Naive thymus-derived CD4-positive, alpha-beta T cell (primary cell): ENCODE measurements at regions of chr5 and their contacts with region 1.

Region 1: DNA sequence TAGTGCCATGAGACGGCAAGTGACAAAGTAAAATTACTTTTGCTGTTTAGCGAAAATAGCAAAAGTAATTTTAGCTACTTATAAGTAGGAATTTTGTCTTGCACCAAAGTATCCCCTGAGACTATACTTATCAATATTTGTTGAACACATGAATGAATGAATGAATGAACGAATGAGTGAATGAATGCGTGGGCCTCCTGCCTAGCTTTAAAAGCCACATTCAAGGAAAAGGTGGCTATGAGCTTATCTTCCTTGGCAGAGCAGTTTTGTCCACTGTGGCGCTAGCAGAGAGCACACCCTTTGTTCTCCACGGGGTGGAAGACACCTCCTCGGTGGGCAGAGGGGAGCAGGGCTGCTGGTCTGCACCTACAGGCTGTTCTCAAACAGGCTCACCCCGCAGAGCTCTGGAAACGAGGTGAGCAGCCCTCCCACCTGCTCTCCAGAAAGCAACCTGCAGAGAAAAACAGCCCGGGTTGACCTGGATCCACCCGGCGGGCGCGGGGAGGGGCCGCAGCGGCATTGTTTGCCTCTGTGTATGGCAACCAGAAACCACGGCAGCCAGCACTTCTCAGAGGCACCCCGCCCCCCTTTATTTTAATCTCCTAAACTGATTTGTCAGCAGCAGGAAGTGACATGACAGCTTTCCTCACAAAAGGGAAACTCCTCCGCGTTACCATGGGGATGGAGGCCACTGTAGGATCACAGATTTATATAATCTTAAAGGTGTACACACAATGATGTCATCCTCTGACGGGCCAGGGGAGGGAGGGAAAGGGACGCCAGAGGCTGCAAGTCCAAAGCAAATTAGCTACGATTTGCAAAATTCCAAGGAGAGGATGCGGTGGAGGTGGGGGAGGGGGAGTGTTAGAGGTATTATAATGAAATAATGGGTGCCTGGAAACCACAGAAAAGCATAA is 5.9 kb downstream of the DUSP1 start:
- DNase-seq: peak; percentile 86 to 100 (median 99)
- ATAC-seq: peak; percentile 73
- H3K4me3 ChIP-seq: peak overlapping the region; percentile 64
- H3K4me3 Mint-ChIP-seq: peak overlapping the region; percentile 80 to 93 (median 84)
- H3K27ac ChIP-seq: peak overlapping the region; percentile 93
- H3K27ac Mint-ChIP-seq: peak overlapping the region; percentile 94 to 100 (median 97)
- H3K4me1 ChIP-seq: peaks cover 25 to 31% of the 10 kb centered on the region in 2 donors
- H3K4me1 Mint-ChIP-seq: peaks cover 8 to 62% (median 52%) of the 10 kb centered on the region in 7 donors
- H3K27me3 ChIP-seq: no peaks in the 10 kb centered on the region
- H3K27me3 Mint-ChIP-seq: peaks cover 0 to 8% (median 0%) of the 10 kb centered on the region in 5 donors

Region 2: DNA sequence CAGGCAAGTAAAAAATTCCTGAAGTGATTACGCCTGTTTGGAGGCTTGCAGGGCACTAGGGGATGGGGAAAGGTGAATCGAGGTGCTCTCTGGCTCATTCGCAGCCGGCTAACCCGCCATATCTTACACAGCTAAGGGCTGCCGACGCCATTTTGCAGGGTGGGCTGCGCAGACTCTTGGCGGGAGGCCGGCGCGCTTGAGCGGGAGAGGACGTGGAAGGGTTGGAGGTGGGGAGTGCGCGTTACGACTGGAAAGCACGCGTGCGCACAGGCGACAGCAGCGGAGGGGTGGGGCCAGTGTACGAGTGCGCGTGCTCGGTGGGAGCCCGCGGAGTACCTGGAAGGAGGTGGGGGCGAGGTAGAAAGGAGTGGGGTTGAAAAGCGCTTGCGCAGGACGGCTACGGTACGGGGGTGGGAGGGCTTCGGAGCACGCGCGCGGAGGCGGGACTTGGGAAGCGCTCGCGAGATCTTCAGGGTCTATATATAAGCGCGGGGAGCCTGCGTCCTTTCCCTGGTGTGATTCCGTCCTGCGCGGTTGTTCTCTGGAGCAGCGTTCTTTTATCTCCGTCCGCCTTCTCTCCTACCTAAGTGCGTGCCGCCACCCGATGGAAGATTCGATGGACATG is 1377.7 kb before region 1 on chr5 and contains the start of gene NPM1:
- CTCF ChIA-PET with region 1: no interaction called
- POLR2A ChIA-PET with region 1: no interaction called
- intact Hi-C with region 1: loop called (anchors 1 to 5 kb)
- DNase-seq: peak; percentile 90 to 99 (median 98)
- ATAC-seq: peak; percentile 93
- H3K4me3 ChIP-seq: peak within 1 kb of the TSS; percentile 91
- H3K4me3 Mint-ChIP-seq: peak within 1 kb of the TSS; percentile 92 to 99 (median 98)
- H3K27ac ChIP-seq: peak within 1 kb of the TSS; percentile 88
- H3K27ac Mint-ChIP-seq: peak within 1 kb of the TSS; percentile 96 to 100 (median 98)
- H3K4me1 ChIP-seq: peaks cover 31 to 40% of the 10 kb centered on the region in 2 donors
- H3K4me1 Mint-ChIP-seq: peaks cover 25 to 52% (median 49%) of the 10 kb centered on the region in 7 donors
- H3K27me3 ChIP-seq: no peaks in the 10 kb centered on the region
- H3K27me3 Mint-ChIP-seq: peaks cover 0 to 6% (median 0%) of the 10 kb centered on the region in 5 donors
- total RNA-seq, gene NPM1: 807 to 1,238 (median 1,192) TPM

Region 3: GRCh38 chr5:172777881-172778814 is 13.0 kb after region 1 on chr5:
- CTCF ChIA-PET with region 1: interaction called, 10 read pairs
- POLR2A ChIA-PET with region 1: interaction called, 31 read pairs
- intact Hi-C with region 1: loop called in 1 of 2 experiments (anchors 1 kb)
- DNase-seq: no peak
- ATAC-seq: peak; percentile 26
- H3K4me3 ChIP-seq: peak overlapping the region; percentile 10
- H3K4me3 Mint-ChIP-seq: peak overlapping the region in 9 of 10 donors; percentile 60 to 81 (median 64)
- H3K27ac ChIP-seq: peak overlapping the region; percentile 89
- H3K27ac Mint-ChIP-seq: peak overlapping the region; percentile 91 to 98 (median 93)
- H3K4me1 ChIP-seq: peaks cover 23 to 27% of the 10 kb centered on the region in 2 donors
- H3K4me1 Mint-ChIP-seq: peaks cover 18 to 46% (median 40%) of the 10 kb centered on the region in 7 donors
- H3K27me3 ChIP-seq: no peaks in the 10 kb centered on the region
- H3K27me3 Mint-ChIP-seq: peaks cover 0 to 3% (median 0%) of the 10 kb centered on the region in 5 donors

Region 4: DNA sequence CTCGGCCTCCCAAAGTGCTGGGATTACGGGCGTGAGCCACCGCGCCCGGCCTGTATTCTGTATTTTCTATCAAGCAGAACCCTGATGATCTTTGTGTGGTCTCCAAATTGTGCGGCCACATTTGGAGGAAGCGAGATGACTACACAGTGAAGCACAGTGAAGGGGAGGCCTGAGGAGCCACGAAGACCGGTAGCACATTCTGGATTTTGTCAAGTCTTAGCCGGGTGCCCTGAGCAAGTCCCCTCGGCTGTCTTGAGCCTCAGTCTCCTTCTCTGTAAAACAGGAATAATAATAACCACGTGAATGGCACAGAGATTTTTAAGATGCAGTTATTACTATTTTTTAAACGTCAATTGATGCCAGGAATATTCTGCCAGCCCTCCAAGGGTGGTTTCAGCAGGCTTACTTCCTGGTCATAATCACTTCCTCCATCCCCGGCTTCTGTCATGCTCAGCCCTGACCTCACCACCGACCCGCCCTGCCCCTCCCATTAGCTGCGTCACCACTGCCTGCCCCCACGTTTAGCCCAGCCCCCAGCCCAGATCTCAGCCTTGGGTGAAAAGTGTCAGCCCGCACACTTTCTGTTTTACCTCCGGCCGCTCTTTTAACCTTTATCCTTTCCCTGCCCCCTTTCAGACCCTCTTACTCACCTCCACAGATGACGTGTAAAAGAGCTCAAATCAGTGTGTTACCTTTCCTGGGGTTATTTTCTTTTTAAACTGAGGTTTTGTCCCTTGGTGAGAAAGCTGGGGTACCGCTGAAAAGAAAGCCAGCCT is 42.0 kb after region 1 on chr5:
- CTCF ChIA-PET with region 1: no interaction called
- POLR2A ChIA-PET with region 1: no interaction called
- intact Hi-C with region 1: loop called in 1 of 2 experiments (anchors 1 kb)
- DNase-seq: peak; percentile 24 to 78 (median 52)
- ATAC-seq: peak; percentile 98
- H3K4me3 ChIP-seq: peak overlapping the region; percentile 45
- H3K4me3 Mint-ChIP-seq: peak overlapping the region; percentile 73 to 87 (median 84)
- H3K27ac ChIP-seq: peak overlapping the region; percentile 74
- H3K27ac Mint-ChIP-seq: peak overlapping the region; percentile 86 to 98 (median 93)
- H3K4me1 ChIP-seq: peaks cover 0 to 12% of the 10 kb centered on the region in 2 donors
- H3K4me1 Mint-ChIP-seq: peaks cover 9 to 17% (median 13%) of the 10 kb centered on the region in 7 donors
- H3K27me3 ChIP-seq: no peaks in the 10 kb centered on the region
- H3K27me3 Mint-ChIP-seq: peaks cover 0 to 2% (median 0%) of the 10 kb centered on the region in 5 donors

Region 5: DNA sequence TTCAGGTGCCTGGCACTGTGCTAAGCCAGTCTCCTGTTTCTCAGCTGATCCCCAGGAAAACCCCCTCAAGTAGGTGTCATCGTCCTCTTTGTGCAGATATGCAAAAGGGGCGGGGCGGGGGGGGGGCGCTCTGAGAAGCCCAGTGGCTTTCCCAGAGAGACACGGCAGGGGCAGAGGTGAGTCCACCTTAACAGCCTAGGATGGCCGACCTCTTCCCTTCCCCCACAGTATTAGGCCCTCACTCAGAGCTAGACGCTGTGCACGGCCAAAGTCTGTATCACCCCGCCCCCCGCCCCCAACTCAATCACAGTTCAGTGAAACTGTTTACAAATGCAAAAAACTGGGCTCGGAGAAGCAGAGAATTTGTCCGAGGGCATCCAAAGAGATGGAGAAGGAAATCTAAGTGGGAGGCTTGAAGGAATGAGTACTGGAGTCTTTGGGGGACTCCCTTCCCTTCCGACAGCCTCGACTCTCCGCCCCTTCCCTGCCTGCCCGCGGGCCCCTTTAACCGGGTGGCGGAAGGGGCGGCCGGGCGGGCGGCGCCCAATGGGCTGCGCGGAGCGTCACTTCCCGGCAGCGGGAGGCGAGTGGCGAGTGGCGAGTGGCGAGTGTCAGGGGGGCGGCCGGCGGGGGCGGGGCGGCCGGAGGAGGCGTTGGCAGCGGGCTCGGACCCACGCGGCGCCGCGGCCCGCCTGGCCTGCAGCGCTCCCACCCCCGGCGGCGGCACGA is 68.7 kb after region 1 on chr5 and contains the start of gene ERGIC1:
- CTCF ChIA-PET with region 1: interaction called, 23 read pairs
- POLR2A ChIA-PET with region 1: interaction called, 61 read pairs
- intact Hi-C with region 1: loop called in 1 of 2 experiments (anchors 1 kb)
- DNase-seq: peak; percentile 49 to 84 (median 58)
- ATAC-seq: peak; percentile 87
- H3K4me3 ChIP-seq: peak within 1 kb of the TSS; percentile 68
- H3K4me3 Mint-ChIP-seq: peak within 1 kb of the TSS; percentile 85 to 93 (median 90)
- H3K27ac ChIP-seq: peak within 1 kb of the TSS; percentile 87
- H3K27ac Mint-ChIP-seq: peak within 1 kb of the TSS; percentile 87 to 97 (median 94)
- H3K4me1 ChIP-seq: peaks cover 23 to 38% of the 10 kb centered on the region in 2 donors
- H3K4me1 Mint-ChIP-seq: peaks cover 25 to 50% (median 40%) of the 10 kb centered on the region in 7 donors
- H3K27me3 ChIP-seq: no peaks in the 10 kb centered on the region
- H3K27me3 Mint-ChIP-seq: no peaks in the 10 kb centered on the region
- total RNA-seq, gene ERGIC1: 44.4 to 71.3 (median 53.5) TPM

Region 6: GRCh38 chr5:172932313-172933017 is 167.4 kb after region 1 on chr5:
- CTCF ChIA-PET with region 1: interaction called, 24 read pairs
- POLR2A ChIA-PET with region 1: interaction called, 16 read pairs
- intact Hi-C with region 1: no loop called
- DNase-seq: peak; percentile 53 to 79 (median 68)
- ATAC-seq: peak; percentile 98
- H3K4me3 ChIP-seq: no peak overlapping the region
- H3K4me3 Mint-ChIP-seq: no peak overlapping the region
- H3K27ac ChIP-seq: no peak overlapping the region
- H3K27ac Mint-ChIP-seq: peak overlapping the region in 8 of 9 donors; percentile 25 to 82 (median 52)
- H3K4me1 ChIP-seq: no peaks in the 10 kb centered on the region
- H3K4me1 Mint-ChIP-seq: peaks cover 0 to 13% (median 6%) of the 10 kb centered on the region in 7 donors
- H3K27me3 ChIP-seq: no peaks in the 10 kb centered on the region
- H3K27me3 Mint-ChIP-seq: no peaks in the 10 kb centered on the region

Region 7: DNA sequence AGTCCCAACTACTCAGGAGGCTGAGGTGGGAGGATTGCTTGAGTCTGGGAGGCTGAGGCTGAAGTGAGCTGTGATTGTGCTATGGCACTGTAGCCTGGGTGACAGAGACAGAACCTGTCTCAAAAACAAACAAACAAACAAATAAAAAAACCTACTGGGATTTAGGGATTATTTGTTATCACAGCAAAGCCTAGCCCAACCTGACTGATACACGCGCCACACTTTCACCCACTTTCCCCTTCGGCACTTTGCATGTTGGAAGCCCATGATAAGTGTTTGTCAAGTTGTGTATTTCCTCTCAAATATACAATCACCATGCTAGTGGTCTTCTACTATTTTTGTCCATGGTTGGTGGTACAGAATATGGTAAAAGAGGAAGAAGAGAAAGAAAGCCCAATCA is 613.6 kb after region 1 on chr5:
- CTCF ChIA-PET with region 1: no interaction called
- POLR2A ChIA-PET with region 1: no interaction called
- intact Hi-C with region 1: no loop called
- DNase-seq: no peak
- ATAC-seq: no peak
- H3K4me3 ChIP-seq: no peak overlapping the region
- H3K4me3 Mint-ChIP-seq: no peak overlapping the region
- H3K27ac ChIP-seq: no peak overlapping the region
- H3K27ac Mint-ChIP-seq: no peak overlapping the region
- H3K4me1 ChIP-seq: no peaks in the 10 kb centered on the region
- H3K4me1 Mint-ChIP-seq: no peaks in the 10 kb centered on the region
- H3K27me3 ChIP-seq: no peaks in the 10 kb centered on the region
- H3K27me3 Mint-ChIP-seq: peaks cover 0 to 34% (median 24%) of the 10 kb centered on the region in 5 donors